ENCODE measurements at regions of chr14 and their contacts with region 1.

Region 1: DNA sequence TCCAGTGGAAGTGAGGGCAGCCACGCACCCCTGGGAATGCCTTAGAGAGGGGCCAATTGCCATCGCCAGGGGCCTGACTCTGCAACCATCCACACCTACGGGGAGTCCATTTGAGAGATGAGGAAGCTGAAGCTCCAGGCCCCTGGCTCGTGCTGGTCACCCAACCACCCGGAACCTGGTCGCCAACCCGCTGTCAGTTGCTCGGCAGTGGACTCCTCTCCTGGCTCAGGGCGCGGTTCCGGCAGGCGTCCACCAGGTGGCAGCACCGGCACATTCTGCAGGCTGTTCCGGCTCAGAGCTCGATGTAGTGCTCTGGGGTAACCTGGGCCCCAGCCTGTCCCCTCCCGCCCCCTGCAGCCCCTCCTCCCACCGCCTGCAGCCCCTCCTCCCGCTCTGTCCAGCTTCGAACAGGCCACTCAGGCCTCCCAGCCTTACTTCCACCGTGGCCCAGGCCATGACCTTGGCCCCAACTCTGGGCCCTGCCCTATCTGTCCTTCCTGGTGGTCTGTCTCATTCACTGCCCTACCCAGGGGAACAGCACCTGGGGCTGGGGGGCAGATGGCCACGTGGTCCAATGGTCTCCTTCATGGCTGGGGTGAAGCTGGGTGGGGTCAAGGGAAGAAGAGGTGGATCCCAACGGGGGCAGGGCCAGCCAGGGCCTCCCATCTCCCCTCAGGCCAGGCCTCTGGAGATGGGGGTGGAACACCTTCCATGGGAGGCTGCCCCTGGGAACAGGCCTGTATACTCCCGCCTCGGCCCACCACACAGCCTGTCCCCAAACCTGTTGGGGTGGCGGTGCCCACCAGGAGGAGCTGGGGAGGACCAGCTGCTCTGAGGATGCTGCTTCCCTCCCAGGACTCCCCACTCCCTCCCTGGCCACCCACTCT is 15.7 kb downstream of the SIVA1 start:
- DNase-seq: peak; percentile 93
- CTCF ChIP-seq: peak; percentile 99

Region 2: GRCh38 chr14:104277416-104278213 is 491.1 kb before region 1 on chr14:
- CTCF ChIA-PET with region 1: no interaction called
- POLR2A ChIA-PET with region 1: no interaction called
- DNase-seq: no peak
- CTCF ChIP-seq: no peak

Region 3: DNA sequence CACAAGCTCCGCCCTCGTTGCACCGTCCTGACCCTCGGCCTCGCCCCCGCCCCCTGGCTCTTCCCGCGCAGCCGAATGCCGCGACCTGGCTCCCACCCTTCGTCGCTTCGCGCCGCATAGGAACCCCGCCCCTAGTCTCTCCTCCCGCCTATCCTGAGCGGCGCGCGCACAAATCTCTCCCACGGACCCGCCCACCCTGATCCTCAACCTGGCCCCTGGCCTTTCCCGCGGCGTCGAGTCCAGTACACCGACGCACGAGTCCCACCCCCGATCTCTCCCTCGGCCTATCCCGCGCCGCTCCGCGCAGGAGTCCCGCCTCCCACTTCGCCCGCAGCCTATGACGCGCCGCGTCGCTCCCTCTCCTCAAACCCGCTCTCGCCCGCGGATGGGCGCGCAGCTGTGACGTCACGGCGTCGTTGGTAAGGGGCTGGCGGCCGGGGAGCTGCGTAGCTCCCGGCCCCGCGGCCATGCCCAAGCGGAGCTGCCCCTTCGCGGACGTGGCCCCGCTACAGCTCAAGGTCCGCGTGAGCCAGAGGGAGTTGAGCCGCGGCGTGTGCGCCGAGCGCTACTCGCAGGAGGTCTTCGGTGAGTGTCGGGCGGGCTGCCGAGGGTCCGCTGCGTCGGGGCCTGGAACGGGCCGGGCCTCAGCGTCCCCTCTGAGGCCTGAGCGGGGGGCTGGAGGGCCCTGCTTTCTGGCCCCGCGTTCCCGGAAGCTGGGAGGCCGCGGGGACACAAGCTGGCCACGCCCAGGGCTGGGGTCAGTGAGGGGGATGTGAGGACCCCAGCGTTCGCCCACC is 15.7 kb before region 1 on chr14 and contains the start of gene SIVA1:
- CTCF ChIA-PET with region 1: interaction called, 136 read pairs
- POLR2A ChIA-PET with region 1: interaction called, 5 read pairs
- DNase-seq: peak; percentile 100
- CTCF ChIP-seq: no peak

Region 4: GRCh38 chr14:104781271-104782077 is 12.8 kb after region 1 on chr14:
- CTCF ChIA-PET with region 1: interaction called, 10 read pairs
- POLR2A ChIA-PET with region 1: no interaction called
- DNase-seq: no peak
- CTCF ChIP-seq: no peak

Region 5: GRCh38 chr14:104792101-104792862 is 23.6 kb after region 1 on chr14:
- CTCF ChIA-PET with region 1: interaction called, 13 read pairs
- POLR2A ChIA-PET with region 1: no interaction called
- DNase-seq: no peak
- CTCF ChIP-seq: no peak

Region 6: DNA sequence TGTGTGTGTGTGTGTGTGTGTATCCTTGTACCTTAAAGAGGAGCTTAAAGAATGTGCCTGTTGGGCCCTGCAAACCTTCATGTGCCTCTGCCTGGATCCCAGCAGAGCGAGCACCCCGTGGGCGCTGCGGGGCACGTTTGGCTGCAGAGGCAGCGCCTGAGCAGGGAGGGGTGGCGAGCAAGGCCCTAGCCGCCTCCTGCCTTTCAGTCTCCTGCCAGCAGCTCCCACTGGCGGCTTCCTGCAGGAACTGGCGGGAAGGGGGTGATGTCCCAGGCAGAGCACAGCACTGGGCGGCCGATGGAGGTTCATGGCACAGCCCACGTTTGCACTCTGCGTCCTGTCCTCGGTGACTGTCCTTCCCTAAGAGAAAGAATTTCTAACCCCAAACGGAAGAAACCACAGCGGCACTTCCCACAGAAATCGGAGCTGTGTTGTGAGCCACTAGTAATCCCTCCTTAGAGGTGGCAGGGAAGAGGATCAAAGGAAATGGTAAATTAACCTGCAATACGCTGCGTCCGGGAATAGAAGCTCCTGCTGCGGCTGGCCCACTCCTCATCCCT is 52.1 kb after region 1 on chr14:
- CTCF ChIA-PET with region 1: interaction called, 59 read pairs
- POLR2A ChIA-PET with region 1: interaction called, 3 read pairs
- DNase-seq: no peak
- CTCF ChIP-seq: no peak

Region 7: DNA sequence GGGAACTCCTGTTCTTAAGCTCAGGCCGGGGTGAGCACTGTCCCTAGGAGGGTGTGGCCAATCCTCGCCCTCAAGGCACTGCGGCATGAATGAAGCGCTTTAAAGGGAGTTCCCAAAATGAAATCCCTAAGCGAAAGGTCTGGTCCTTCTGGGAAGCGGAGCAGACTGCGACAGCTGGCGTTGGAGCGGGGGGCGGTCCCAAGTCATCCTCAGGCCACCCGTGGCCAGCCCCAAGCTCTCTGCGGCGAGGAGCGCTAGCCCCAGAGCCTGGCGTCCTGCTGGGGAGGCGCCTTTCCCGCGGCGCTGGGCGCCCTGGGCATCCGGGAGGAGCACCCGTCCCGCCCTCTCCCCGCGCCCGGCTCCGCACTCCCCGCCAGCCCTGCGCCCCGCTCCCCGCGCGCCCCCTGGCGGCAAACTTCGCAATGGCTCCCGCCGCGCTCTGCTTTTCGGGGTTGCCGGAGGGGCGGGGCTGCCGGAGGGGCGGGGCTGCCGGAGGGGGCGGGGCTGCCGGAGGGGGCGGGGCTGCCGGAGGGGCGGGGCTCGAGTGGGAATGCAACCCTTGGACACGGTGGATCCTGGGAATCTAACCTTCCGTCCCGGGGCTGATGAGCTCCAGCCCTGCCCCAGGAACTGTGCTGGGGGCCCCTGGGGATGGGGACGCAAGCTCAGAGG is 57.6 kb after region 1 on chr14:
- CTCF ChIA-PET with region 1: interaction called, 59 read pairs
- POLR2A ChIA-PET with region 1: interaction called, 3 read pairs
- DNase-seq: peak; percentile 92
- CTCF ChIP-seq: peak; percentile 88